ENCODE measurements at regions of chr22 and their contacts with region 1.

Region 1: DNA sequence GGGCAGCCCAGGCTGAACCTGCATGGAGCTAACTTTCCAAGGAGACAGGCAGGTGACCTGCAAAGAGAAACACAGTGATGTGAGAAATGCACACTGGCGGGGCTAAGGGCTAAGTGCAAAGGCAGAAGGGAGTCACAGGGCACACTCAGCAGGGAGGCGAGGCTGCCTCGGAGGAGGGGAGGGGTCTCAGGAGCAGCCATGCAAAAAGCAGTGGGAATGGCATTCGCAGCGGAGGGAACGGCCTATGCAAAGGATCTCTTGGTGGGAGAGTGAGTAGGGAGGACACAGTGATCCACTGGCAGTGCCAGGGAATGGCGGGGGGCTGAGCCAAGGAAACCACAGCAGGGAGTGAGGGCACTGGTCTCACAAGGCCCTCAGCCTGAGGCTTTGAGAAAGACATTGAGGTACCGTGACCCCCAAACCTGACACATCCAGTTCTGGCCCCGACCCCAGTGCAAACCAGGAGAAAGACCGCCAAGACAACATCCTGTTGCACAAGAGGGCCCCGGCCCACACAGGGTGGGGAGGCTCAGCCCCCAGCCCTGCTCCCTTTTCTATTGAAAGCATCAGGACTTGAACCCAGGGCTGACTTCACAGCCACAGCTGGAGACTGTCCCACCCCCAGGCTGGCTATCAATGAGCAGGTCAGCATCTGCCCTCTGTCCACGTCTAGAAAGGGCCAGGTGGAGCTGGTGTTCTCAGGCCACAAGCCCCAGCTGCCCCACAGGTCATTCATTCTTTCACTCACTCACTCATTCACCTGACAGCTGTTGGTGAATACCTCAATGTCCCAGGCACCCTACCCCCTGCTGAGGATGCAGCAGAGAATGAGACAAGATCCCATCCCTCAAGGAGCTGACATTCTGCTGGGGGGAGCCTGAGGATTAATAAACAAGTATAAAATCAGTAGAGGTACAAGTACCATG is 50.7 kb downstream of the IGLL1 start:
- DNase-seq: no peak
- H3K4me3 ChIP-seq: no peak overlapping the region
- H3K27ac ChIP-seq: no peak overlapping the region
- H3K4me1 ChIP-seq: no peaks in the 10 kb centered on the region
- H3K27me3 ChIP-seq: no peaks in the 10 kb centered on the region
- CTCF ChIP-seq: no peak
- POLR2A ChIP-seq: no peak

Region 2: DNA sequence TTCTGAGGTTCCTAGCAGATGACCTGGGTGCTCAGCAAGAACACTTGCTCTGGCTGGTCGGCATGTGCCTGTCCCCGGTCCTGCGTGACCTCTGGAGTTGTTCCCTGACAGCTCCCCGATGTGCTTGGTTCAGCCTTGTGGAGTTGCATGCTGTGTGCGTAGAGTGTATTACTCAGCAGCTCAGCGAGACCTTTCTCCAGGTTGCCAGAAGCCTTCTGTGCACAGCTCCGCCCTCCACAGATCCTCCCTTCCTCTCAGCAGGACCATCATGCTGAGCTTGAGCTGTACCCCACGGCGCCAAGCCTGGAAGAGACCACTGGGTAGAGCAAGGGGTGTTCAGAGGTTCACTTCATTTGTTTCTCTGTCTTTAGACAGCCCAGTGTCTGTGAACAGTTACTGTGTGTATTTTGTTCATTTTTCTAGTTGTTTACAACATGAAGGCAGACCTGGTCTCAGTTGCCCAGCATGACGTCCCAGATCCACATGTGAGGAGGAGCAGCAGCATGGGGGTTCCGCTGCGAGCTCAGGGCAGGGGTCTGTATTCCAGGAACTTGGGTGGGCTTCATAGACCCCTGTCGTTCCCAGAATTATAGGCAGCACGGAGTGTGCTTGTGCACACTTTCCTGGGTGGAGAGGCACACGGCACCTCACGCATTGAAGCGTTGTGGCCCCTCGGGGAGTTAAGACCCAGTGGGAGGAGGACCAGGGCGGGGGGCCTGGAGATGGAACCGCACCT is 97.9 kb before region 1 on chr22:
- intact Hi-C with region 1: no loop called
- DNase-seq: no peak
- H3K4me3 ChIP-seq: no peak overlapping the region
- H3K27ac ChIP-seq: no peak overlapping the region
- H3K4me1 ChIP-seq: no peaks in the 10 kb centered on the region
- H3K27me3 ChIP-seq: no peaks in the 10 kb centered on the region
- CTCF ChIP-seq: no peak
- POLR2A ChIP-seq: no peak

Region 3: DNA sequence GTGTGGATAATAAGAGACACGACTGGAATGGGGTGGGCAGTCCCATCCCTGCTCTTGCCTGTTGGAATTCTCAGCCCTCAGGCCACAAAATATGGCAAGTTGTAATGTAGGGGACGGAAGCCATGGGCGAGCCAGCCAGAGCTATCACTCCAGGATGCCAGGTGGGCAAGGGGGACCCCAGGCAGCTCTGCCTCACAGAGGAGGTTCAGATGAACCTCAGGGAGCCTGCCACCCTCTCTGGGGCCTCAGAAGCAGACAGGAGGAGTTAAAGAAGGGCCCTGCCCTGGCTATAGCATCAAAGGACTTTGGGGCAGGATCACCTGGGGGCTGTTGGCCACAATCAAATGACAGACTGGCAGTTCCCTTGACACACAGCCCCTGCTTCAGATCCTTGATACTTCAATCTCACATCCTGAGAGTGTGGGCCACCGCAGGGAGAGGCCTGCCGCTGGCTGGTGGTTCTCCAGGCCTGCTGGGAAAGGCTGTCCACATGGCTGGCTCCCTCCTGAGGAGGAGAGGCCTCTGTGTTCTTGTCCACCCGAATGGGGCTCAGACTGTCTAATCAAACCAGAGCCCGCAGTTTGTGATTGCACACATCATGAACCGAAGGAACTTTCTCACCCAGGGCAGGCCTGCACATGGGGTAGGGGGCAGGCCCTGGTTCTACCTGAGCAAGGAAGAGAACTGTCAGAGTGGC is 19.2 kb after region 1 on chr22:
- intact Hi-C with region 1: loop called (anchors 1 kb)
- DNase-seq: no peak
- H3K4me3 ChIP-seq: no peak overlapping the region
- H3K27ac ChIP-seq: peak overlapping the region; percentile 68 to 72
- H3K4me1 ChIP-seq: no peaks in the 10 kb centered on the region
- H3K27me3 ChIP-seq: no peaks in the 10 kb centered on the region
- CTCF ChIP-seq: no peak
- POLR2A ChIP-seq: no peak